ENCODE measurements at regions of chr2 and their contacts with region 1.

Region 1: GRCh38 chr2:232350861-232351514 is 27.6 kb upstream of the ALPP start:
- DNase-seq: no peak
- H3K4me3 Mint-ChIP-seq: no peak overlapping the region
- H3K27ac Mint-ChIP-seq: no peak overlapping the region
- H3K4me1 Mint-ChIP-seq: no peaks in the 10 kb centered on the region
- H3K27me3 Mint-ChIP-seq: peaks cover 29% of the 10 kb centered on the region

Region 2: DNA sequence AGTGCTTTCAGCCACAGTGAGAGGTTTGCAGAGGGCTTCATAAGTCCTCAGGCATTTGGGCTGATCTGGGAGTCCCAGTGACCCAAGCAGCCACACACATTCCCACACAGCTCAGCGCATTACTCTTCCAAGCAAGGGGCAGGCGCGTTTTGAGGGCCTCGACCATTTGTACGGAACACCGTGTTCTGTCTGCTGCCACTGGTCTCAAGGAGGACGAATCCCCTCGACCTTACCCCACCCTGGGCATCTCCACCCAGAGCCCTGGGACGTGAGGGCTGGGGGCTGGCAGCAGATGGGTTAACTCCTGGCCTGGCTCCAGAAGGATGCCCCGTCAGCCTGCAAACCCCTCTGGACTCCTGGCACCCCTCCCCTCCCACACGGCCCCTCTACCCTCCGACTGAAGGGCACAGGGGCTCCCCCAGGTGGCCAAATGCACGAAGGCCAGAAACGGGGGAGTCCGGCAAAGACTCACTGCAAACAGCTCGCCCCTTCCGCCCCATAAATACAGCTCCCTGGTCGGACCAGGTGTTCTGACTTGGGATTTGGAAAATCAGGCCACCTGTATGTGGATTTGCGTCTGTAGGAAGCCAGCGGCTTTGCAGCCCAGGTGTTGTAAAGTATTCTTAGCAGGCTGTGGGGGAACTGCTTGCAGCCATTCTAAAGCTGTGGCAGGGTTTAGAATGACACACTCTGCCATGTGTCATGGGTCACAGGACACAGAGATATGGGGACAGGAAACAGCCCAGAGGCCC is 676.2 kb before region 1 on chr2:
- intact Hi-C with region 1: no loop called
- DNase-seq: peak; percentile 52
- H3K4me3 Mint-ChIP-seq: no peak overlapping the region
- H3K27ac Mint-ChIP-seq: peak overlapping the region; percentile 65
- H3K4me1 Mint-ChIP-seq: peaks cover 16% of the 10 kb centered on the region
- H3K27me3 Mint-ChIP-seq: no peaks in the 10 kb centered on the region

Region 3: DNA sequence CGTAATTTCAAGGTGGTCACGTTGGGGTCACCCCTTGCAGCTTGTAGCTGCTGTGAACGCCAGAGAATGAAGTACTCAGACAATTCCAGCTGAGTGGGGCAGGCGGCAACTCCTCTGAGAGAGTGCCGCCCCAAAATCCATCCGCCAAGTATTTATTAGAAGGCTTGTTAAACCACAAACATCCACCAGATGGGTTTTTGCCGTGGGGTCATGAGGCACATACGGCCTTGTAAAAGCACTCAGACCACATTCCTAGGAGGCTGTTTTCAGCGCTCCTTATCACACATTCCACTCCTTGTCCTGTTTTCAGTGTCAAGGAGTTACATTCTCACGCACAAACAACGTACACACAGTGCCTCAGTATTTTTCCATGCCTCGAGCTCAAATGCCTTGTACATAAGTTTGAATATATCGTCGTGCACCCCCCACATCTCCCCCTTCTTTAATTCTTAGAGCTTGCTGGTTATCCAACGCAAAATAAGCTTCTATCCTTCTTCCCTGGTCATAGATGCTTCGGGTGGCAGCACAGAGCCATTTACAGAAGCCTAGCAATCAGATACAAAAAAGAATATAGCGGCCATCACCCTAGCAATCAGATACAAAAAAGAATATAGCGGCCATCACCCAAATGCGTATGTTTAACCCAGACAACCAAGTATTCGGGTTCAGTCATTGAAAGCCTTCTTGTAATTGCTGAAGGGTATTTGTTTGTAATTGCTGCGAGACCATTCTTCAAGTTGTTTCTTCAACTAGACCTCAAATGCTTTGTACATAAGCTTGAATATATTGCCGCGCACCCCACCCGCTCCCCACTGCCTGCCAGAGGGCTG is 34.9 kb after region 1 on chr2:
- intact Hi-C with region 1: loop called (anchors 5 kb)
- DNase-seq: no peak
- H3K4me3 Mint-ChIP-seq: no peak overlapping the region
- H3K27ac Mint-ChIP-seq: no peak overlapping the region
- H3K4me1 Mint-ChIP-seq: peaks cover 2% of the 10 kb centered on the region
- H3K27me3 Mint-ChIP-seq: peaks cover 42% of the 10 kb centered on the region

Measured in activated T-helper 2 cell treated with anti-CD3 and anti-CD28 coated beads, Interferon-gamma antibody, Interleukin-2, Interleukin-4, amounts not matched to agents 10 μg/mL and 5 μg/mL and 100 μg/mL, durations not matched to agents 14 hours and 24 hours and 36 hours (primary cell).